ENCODE measurements at regions of chr18 and their contacts with region 1.

Region 1: GRCh38 chr18:13934676-13935075 is 19.3 kb upstream of the MC2R start:
- DNase-seq: no peak
- ATAC-seq: no peak
- H3K4me3 Mint-ChIP-seq: no peak overlapping the region
- H3K27ac Mint-ChIP-seq: no peak overlapping the region
- H3K4me1 Mint-ChIP-seq: no peaks in the 10 kb centered on the region
- H3K27me3 Mint-ChIP-seq: no peaks in the 10 kb centered on the region
- CTCF ChIP-seq: no peak

Region 2: DNA sequence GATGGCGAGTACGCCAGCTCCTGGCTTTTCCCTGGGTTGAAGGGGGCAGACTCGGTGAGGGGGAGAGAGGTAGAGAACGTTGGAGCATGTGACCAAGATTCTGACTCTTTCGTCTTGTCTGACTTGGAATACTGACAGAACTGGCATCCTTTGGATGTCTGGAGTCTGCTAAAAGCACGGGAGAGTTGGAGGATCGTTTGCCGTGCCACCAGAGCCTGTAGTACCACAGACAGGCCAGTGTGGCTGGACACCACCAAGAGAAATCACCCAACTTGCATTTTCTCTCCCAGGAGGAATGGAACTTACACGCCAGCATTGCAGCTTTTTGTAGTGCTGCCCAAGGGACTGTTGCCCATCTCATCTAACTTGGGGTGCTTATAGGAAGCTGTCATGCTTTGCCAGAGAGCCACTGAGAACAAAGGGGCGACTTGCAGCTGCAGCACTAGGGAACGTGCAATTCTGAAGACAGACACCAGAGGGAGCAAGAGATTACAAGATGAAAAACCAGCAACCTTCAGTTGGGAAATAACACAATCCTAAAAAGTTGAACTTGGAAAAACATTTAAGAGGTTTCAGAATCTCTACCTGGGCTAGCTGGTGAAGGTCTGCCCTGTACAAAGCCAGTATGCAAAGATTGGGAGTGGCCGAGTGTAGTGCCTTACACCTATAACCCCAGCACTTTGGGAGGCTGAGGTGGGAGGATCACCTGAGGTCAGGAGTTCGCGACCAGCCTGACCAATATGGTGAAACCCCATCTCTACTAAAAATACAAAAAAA is 1207.7 kb before region 1 on chr18:
- CTCF ChIA-PET with region 1: no interaction called
- POLR2A ChIA-PET with region 1: no interaction called
- intact Hi-C with region 1: no loop called
- DNase-seq: peak; percentile 66
- ATAC-seq: peak; percentile 86
- H3K4me3 Mint-ChIP-seq: no peak overlapping the region
- H3K27ac Mint-ChIP-seq: no peak overlapping the region
- H3K4me1 Mint-ChIP-seq: peaks cover under 1% of the 10 kb centered on the region
- H3K27me3 Mint-ChIP-seq: no peaks in the 10 kb centered on the region
- CTCF ChIP-seq: peak; percentile 96

Region 3: DNA sequence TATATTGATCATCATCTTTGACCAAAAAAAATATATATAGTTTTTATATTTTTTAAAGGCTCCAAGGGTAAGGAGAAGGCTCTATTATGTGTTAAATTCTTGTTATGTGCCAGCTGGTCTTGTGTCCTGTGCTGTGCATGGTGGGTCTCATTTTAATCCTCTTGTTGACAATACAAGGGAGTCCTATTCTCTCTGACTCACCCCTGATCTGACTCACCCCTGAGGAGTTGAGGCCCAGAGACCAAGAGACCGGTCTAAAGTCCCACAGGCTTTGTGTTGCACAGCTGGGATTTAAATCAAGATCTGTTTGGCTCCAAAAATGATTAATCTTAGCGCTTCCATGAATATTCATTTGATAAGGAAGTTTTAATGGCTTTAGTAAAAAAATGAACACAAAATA is 45.0 kb before region 1 on chr18:
- CTCF ChIA-PET with region 1: no interaction called
- POLR2A ChIA-PET with region 1: no interaction called
- intact Hi-C with region 1: loop called (anchors 10 kb)
- DNase-seq: no peak
- ATAC-seq: no peak
- H3K4me3 Mint-ChIP-seq: no peak overlapping the region
- H3K27ac Mint-ChIP-seq: no peak overlapping the region
- H3K4me1 Mint-ChIP-seq: no peaks in the 10 kb centered on the region
- H3K27me3 Mint-ChIP-seq: peaks cover 12% of the 10 kb centered on the region
- CTCF ChIP-seq: no peak

Region 4: DNA sequence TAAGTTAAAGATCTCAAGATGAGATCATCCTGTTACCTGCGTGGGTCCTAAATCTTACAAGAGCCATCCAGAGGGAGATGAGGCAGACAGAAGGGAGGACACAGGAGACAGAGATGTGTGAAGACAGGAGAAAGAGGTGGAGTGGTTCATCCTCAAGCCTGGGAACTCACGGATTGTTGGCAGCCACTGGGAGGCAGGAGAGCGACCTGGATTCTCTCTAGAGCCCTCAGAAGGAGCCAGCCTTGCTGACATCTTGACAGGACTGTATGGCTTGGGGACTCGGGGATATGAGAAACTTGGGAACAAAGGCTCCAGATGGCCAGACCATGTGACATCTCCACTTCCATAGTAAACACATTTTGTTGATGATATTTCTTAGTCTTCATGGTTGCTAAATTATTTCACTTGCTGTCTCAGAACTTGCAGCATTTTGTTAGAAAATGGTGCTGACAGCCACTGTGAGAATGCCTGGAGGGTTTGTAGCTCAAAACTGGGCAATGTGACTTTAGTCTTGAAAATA is 38.4 kb after region 1 on chr18:
- CTCF ChIA-PET with region 1: no interaction called
- POLR2A ChIA-PET with region 1: no interaction called
- intact Hi-C with region 1: loop called (anchors 5 kb)
- DNase-seq: no peak
- ATAC-seq: no peak
- H3K4me3 Mint-ChIP-seq: no peak overlapping the region
- H3K27ac Mint-ChIP-seq: no peak overlapping the region
- H3K4me1 Mint-ChIP-seq: no peaks in the 10 kb centered on the region
- H3K27me3 Mint-ChIP-seq: no peaks in the 10 kb centered on the region
- CTCF ChIP-seq: no peak

Region 5: GRCh38 chr18:14093307-14093915 is 158.7 kb after region 1 on chr18:
- CTCF ChIA-PET with region 1: no interaction called
- POLR2A ChIA-PET with region 1: no interaction called
- intact Hi-C with region 1: no loop called
- DNase-seq: no peak
- ATAC-seq: no peak
- H3K4me3 Mint-ChIP-seq: no peak overlapping the region
- H3K27ac Mint-ChIP-seq: no peak overlapping the region
- H3K4me1 Mint-ChIP-seq: peaks cover 11% of the 10 kb centered on the region
- H3K27me3 Mint-ChIP-seq: no peaks in the 10 kb centered on the region
- CTCF ChIP-seq: no peak

Measured in activated CD8-positive, alpha-beta T cell treated with anti-CD3 and anti-CD28 coated beads for 36 hours (primary cell).